GM23248 (cell line): ENCODE measurements at regions of chr7 and their contacts with region 1.

Region 1: DNA sequence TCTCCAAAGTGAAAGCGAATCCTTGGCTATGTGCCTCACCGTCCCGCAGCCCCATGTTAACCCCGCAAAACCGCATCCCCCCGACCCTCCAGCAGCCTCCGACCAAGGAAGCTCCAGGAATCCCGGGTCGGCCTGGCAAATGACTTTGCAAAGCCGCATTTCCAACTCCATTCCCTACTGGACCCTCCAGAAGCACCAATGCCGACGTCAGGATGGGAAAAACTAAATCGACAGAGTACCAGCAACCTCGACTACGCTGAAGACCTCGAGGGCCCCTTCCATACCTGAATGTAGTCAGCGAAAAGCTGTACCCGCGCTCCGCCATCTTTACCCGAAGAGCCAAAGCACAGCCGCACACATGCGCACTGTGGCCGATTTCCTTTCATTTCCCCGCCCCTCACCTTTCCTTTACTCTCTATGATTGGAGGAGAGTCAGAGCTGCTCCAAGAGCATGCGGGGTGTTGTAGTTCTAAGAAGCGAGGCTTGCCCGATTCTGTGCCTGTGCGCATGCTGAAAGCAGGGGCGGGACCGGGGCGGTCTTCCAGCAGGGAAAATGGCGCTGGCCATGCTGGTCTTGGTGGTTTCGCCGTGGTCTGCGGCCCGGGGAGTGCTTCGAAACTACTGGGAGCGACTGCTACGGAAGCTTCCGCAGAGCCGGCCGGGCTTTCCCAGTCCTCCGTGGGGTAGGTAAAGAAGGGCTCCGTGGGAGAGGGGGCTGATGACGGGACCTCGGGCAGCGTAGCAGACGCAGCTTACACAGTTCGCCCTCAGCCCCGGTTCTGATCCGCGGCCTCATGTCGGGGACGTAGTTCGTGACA is at the starts of genes MRPL32 and PSMA2:
- DNase-seq: peak; percentile 100
- H3K4me3 ChIP-seq: peak within 1 kb of the TSS; percentile 98
- H3K27ac ChIP-seq: peak within 1 kb of the TSS; percentile 69
- H3K4me1 ChIP-seq: peaks cover 34% of the 10 kb centered on the region
- H3K27me3 ChIP-seq: no peaks in the 10 kb centered on the region
- total RNA-seq, gene MRPL32: 43.4 and 45.3 TPM in 2 replicates
- total RNA-seq, gene PSMA2: 55.1 and 65.2 TPM in 2 replicates

Region 2: DNA sequence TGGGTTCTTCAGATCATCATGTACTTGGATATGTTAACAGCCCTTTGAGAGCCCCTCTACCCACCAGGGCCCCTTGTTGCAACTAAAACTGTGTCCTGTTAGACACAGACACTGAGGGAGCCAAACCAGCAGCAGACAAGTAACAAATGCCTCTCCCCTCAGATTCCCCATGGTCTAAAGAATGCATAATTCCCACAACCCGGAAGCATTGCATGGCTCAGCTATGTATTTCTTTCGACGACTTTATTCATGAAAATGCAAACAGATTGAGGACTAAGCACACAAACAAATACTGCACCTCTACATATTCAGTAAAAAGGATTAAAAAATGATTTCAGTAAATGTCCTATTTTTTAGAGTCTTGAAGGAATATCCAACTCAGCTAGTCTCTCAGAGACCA is 110.3 kb after region 1 on chr7:
- in situ Hi-C with region 1: no loop called
- DNase-seq: no peak
- H3K4me3 ChIP-seq: no peak overlapping the region
- H3K27ac ChIP-seq: no peak overlapping the region
- H3K4me1 ChIP-seq: peaks cover 25% of the 10 kb centered on the region
- H3K27me3 ChIP-seq: no peaks in the 10 kb centered on the region

Region 3: DNA sequence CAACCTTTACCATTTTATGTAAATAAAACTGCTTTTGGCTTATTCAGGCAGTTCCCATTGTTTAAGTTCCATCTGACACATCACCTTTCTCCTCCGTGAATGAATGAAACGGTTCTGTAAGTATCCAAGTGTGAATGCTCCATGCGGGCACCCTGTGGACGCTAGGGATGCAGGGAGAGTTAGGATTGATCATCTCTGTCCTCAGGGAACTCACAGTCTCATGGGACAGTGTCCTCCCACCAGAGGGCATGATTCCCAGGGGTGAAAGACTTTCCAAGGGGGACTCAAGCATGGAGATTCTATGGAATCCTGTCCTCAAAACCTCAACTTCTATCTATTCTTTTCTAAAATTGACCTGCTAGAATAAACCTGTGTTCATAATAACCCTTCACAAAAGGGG is 279.2 kb after region 1 on chr7:
- in situ Hi-C with region 1: no loop called
- DNase-seq: peak; percentile 10
- H3K4me3 ChIP-seq: no peak overlapping the region
- H3K27ac ChIP-seq: no peak overlapping the region
- H3K4me1 ChIP-seq: peaks cover 11% of the 10 kb centered on the region; the same call in 1 of the 2 replicates
- H3K27me3 ChIP-seq: no peaks in the 10 kb centered on the region

Region 4: GRCh38 chr7:43454936-43455518 is 523.0 kb after region 1 on chr7:
- in situ Hi-C with region 1: loop called (anchors 10 kb)
- DNase-seq: peak; percentile 72
- H3K4me3 ChIP-seq: peak overlapping the region; percentile 31
- H3K27ac ChIP-seq: no peak overlapping the region
- H3K4me1 ChIP-seq: peaks cover 6% of the 10 kb centered on the region; the same call in 1 of the 2 replicates
- H3K27me3 ChIP-seq: no peaks in the 10 kb centered on the region

Region 5: DNA sequence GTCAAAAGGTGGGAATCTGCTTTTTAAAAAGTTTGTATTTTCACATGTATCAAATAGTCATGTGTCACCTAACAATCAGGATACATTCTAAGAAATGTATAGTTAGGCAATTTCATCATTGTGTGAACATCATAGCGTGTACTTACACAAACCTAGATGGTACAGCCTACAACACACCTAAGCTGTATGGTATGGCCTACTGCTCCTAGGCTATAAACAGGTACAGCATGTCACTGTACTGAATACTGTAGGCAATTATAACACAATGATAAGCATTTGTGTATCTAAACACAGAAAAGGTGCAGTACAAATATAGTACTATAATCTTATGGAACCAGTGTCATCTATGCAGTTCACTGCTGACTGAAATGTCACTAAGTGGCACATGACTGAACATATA is 779.5 kb after region 1 on chr7:
- in situ Hi-C with region 1: loop called (anchors 10 kb)
- DNase-seq: no peak
- H3K4me3 ChIP-seq: no peak overlapping the region
- H3K27ac ChIP-seq: no peak overlapping the region
- H3K4me1 ChIP-seq: no peaks in the 10 kb centered on the region
- H3K27me3 ChIP-seq: no peaks in the 10 kb centered on the region